ENCODE measurements at regions of chr1 and their contacts with region 1.

Region 1: GRCh38 chr1:150979092-150980056 is 2.7 kb upstream of the ANXA9 start:
- DNase-seq: peak; percentile 73 to 88
- ATAC-seq: peak; percentile 23 to 68 (median 50)
- H3K4me3 ChIP-seq: peak overlapping the region in 6 of 10 donors; percentile 8 to 42 (median 24)
- H3K27ac ChIP-seq: peak overlapping the region in 5 of 10 donors; percentile 18 to 91 (median 51)
- H3K4me1 ChIP-seq: peaks cover 3 to 52% (median 14%) of the 10 kb centered on the region in 9 donors
- H3K27me3 ChIP-seq: no peaks in the 10 kb centered on the region
- CTCF ChIP-seq: peak; percentile 99 to 100 (median 100)

Region 2: DNA sequence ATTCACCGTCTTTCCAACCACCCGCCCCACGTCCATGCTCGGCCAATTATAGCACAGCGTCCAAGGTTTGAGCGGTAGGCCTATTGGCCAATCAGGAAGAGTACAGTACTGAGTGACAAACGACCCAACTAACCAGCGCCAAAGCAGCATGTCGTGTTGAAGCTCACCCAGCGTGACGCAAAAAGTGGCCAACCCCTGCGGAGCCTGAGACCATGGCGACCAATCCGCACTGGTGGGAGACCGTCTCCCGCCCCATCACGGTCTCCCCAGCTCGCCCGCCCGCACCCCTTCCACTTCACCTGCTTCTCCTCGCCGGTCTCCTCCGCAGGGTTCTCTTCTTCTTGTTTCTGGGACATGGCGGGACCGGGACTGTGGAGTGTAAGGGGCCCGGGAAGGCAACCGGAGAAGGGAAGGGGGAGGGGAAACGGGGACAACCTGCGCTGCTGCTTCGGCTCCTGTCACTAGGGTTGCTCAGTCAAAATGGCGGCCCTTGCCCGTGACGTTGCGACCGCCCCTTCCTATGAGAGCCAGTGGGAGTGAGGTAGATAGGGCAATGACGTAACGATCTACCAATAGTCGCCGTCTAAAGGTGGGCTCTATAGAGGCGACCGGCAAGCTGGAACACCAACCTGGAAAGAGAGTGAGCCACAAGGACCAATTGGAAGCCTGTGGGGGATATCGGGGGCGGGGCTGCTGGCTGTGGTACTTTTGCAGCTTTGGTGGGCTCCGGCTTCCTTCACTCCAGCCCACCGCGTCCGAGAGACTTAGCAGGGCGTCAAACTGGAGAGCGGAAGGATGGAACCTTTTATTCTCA is 350.1 kb before region 1 on chr1 and contains the start of gene ENSA:
- intact Hi-C with region 1: loop called in 1 of 10 experiments (anchors 10 kb)
- DNase-seq: peak; percentile 95 to 99
- ATAC-seq: peak; percentile 96 to 98 (median 97)
- H3K4me3 ChIP-seq: peak within 1 kb of the TSS; percentile 48 to 81 (median 66)
- H3K27ac ChIP-seq: peak within 1 kb of the TSS; percentile 83 to 100 (median 96)
- H3K4me1 ChIP-seq: peaks cover 3 to 54% (median 24%) of the 10 kb centered on the region in 9 donors
- H3K27me3 ChIP-seq: no peaks in the 10 kb centered on the region
- CTCF ChIP-seq: no peak
- total RNA-seq, gene ENSA: 115 to 148 (median 132) TPM

Region 3: DNA sequence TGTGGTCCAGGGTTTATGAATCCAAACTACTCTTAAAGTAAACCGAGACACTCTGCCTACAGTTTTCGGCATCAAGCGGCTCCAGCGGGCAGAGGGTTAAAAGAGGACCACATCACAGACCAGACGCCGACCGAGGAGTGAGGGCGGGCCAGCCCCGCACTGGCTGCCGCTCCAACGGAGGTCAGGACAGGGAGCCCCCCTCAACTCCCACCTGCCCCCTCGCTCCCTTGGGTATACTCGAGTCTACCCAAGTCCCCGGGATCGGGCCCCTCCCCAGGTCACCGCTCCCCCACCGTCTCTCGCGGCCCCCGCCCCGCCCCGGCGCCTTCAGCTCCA is 103.3 kb before region 1 on chr1:
- intact Hi-C with region 1: loop called in 3 of 10 experiments (anchors 5 to 10 kb)
- DNase-seq: no peak
- ATAC-seq: peak; percentile 62 to 82 (median 66)
- H3K4me3 ChIP-seq: peak overlapping the region; percentile 48 to 98 (median 89)
- H3K27ac ChIP-seq: peak overlapping the region; percentile 87 to 99 (median 96)
- H3K4me1 ChIP-seq: peaks cover 0 to 45% (median 22%) of the 10 kb centered on the region in 9 donors
- H3K27me3 ChIP-seq: no peaks in the 10 kb centered on the region
- CTCF ChIP-seq: no peak

Region 4: GRCh38 chr1:150925816-150926741 is 53.3 kb before region 1 on chr1 and contains the start of gene SETDB1:
- intact Hi-C with region 1: loop called in 3 of 10 experiments (anchors 5 kb)
- DNase-seq: peak; percentile 93 to 96
- ATAC-seq: peak; percentile 98 to 99 (median 99)
- H3K4me3 ChIP-seq: peak within 1 kb of the TSS; percentile 49 to 81 (median 70)
- H3K27ac ChIP-seq: peak within 1 kb of the TSS in 9 of 10 donors; percentile 57 to 93 (median 83)
- H3K4me1 ChIP-seq: peaks cover 0 to 31% (median 10%) of the 10 kb centered on the region in 9 donors
- H3K27me3 ChIP-seq: no peaks in the 10 kb centered on the region
- CTCF ChIP-seq: peak in 6 of 9 donors; percentile 7 to 33 (median 20)
- total RNA-seq, gene SETDB1: 14.5 to 23.8 (median 17.6) TPM

Region 5: DNA sequence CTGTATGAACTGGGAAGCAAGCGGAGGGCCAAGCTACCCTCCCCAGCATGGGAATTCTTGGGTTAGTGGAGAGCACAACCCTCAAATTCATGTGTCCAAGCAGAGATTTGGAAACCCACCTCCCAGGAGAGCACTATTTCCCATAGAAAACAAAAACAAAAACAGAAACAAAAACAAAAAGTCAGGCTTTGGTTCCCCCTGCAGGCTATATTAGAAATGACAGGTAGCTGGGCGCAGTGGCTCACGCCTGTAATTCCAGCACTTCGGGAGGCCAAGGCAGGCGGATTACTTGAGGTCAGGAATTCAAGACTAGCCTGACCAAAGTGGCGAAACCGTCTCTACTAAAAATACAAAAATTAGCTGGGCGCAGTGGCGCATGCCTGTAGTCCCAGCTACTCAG is 16.5 kb after region 1 on chr1:
- intact Hi-C with region 1: loop called in 1 of 10 experiments (anchors 2 kb)
- DNase-seq: no peak
- ATAC-seq: peak in 7 of 8 donors; percentile 16 to 76 (median 61)
- H3K4me3 ChIP-seq: peak overlapping the region in 5 of 10 donors; percentile 14 to 41 (median 24)
- H3K27ac ChIP-seq: peak overlapping the region in 7 of 10 donors; percentile 17 to 62 (median 49)
- H3K4me1 ChIP-seq: peaks cover 0 to 31% (median 12%) of the 10 kb centered on the region in 9 donors
- H3K27me3 ChIP-seq: no peaks in the 10 kb centered on the region
- CTCF ChIP-seq: peak; percentile 64 to 90 (median 85)

Region 6: GRCh38 chr1:151008190-151008860 is 29.0 kb after region 1 on chr1 and contains the start of gene PRUNE1:
- intact Hi-C with region 1: loop called in 1 of 10 experiments (anchors 2 kb)
- DNase-seq: peak; percentile 97 to 98
- ATAC-seq: peak; percentile 91 to 95 (median 93)
- H3K4me3 ChIP-seq: peak within 1 kb of the TSS; percentile 47 to 85 (median 76)
- H3K27ac ChIP-seq: peak within 1 kb of the TSS; percentile 52 to 96 (median 92)
- H3K4me1 ChIP-seq: peaks cover 10 to 90% (median 81%) of the 10 kb centered on the region in 9 donors
- H3K27me3 ChIP-seq: no peaks in the 10 kb centered on the region
- CTCF ChIP-seq: peak in 2 of 9 donors; percentile 9 to 25
- total RNA-seq, gene PRUNE1: 37.5 to 50.1 (median 46.0) TPM

Measured in heart right ventricle (tissue), 16 donors.